ENCODE measurements at regions of chr10 and their contacts with region 1.

Region 1: GRCh38 chr10:102729029-102730026 is 14.4 kb upstream of the WBP1L start:
- DNase-seq: peak; percentile 91
- H3K4me3 ChIP-seq: no peak overlapping the region
- H3K27ac ChIP-seq: no peak overlapping the region
- H3K4me1 ChIP-seq: no peaks in the 10 kb centered on the region
- H3K27me3 ChIP-seq: no peaks in the 10 kb centered on the region
- CTCF ChIP-seq: peak; percentile 85 to 89 (median 85)
- POLR2A ChIP-seq: no peak

Region 2: DNA sequence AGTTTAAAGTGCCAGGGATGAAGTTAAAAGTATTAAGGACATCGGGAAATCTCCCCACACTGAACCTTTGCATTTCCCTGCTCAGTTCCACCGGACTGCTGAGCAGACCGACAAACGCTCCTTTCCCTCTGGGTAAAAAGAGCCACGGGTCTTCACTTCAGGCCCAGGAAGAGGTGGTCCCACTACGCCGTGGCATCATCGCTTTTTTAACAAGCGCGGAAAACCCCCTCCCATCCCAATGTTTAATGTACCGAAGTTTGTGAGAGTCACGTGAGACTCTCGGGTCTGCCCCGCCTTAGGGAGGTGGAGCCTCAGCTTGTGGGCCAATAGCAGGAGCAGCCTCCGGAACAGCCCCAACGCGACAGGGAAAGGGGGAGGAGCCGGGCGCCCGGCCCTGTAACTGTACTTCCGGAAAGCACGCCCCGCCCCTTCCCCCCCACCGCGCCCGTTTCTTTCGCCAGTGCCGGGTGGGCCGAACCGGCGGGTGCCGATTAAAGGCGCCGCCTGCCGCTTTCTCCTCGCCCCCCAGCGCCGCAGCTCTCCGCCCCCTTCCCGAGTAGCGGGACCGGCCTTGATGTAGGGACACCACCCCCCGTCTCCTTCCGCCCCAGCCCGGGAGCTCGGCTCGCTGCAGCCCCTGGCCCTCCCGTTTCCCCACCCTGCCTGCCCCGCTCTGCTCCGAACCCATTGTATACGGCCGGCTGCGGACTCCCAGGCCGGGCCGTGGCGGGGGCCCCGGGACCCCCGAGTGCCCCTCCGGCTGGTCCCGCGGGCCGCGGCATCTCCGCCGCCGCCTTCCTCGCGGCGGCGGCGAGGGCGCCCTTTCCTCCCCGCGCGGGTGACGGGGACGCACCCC is 87.2 kb before region 1 on chr10:
- intact Hi-C with region 1: no loop called
- DNase-seq: peak; percentile 99
- H3K4me3 ChIP-seq: peak overlapping the region; percentile 79 to 81
- H3K27ac ChIP-seq: peak overlapping the region; percentile 96 to 99
- H3K4me1 ChIP-seq: peaks cover 10% of the 10 kb centered on the region
- H3K27me3 ChIP-seq: no peaks in the 10 kb centered on the region
- CTCF ChIP-seq: no peak
- POLR2A ChIP-seq: peak; percentile 74

Region 3: GRCh38 chr10:102822222-102822621 is 92.9 kb after region 1 on chr10:
- intact Hi-C with region 1: loop called (anchors 10 kb)
- DNase-seq: no peak
- H3K4me3 ChIP-seq: no peak overlapping the region
- H3K27ac ChIP-seq: no peak overlapping the region
- H3K4me1 ChIP-seq: no peaks in the 10 kb centered on the region
- H3K27me3 ChIP-seq: no peaks in the 10 kb centered on the region
- CTCF ChIP-seq: no peak
- POLR2A ChIP-seq: no peak